H1 (cell line): ENCODE measurements at regions of chr2 and their contacts with region 1.

Region 1: DNA sequence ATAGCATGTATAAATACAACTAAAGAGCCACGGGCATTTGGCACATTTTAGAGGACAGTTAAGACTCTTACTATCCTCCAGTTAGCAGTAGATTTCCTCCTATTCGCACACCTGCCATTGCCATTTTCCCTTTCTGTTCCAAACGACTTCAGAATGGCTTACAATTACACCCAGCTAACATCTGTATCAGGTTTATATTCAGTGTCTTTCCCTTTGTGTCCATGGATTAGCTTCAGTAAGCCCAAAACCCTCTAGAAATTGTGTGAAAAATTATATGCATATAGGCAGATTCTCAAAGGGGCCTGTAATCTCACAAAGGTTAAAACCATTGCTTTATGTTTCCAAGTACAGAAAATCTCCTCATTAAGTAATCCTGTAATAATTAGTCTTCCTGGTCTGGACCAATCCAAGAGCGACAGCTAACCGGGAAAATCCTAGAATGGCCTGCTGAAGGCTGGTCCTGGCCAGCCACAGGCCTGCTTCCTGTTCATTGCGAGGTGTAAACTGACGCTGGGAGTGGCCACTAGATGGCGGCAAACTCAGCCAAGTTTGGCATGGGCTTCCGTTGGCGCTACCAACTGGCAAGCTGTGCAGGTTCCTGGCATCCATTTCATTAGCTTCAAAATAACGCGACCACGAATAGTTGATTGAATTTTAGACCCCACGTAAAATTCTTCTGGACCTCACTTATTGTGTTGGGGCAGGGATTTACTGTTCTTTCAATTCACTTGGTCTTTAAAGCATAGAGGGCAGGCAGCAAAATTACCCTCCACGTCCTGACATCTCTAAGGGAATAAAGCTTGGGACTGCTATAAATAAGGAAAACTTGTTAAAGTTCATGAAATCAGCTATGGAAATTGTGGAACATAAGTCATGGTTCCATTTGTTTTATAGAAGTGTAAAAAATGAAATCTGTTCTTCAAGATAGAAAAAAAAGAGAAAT is 17.1 kb downstream of the ARHGAP25 start:
- DNase-seq: peak; percentile 69 to 95
- H3K4me3 ChIP-seq: no peak overlapping the region
- H3K27ac ChIP-seq: no peak overlapping the region
- H3K4me1 ChIP-seq: peaks cover 0 to 3% (median 0%) of the 10 kb centered on the region in 4 experiments; a peak in 1 of 7 replicates
- H3K27me3 ChIP-seq: no peaks in the 10 kb centered on the region
- CTCF ChIP-seq: peak; percentile 93 to 97 (median 96)
- EP300 ChIP-seq: 0 out of 3 replicates have a peak, but pooled peaks of 1 of the 2 experiments have one; percentile 14
- POLR2A ChIP-seq: no peak
- RAD21 ChIP-seq: peak; percentile 87 to 94

Region 2: DNA sequence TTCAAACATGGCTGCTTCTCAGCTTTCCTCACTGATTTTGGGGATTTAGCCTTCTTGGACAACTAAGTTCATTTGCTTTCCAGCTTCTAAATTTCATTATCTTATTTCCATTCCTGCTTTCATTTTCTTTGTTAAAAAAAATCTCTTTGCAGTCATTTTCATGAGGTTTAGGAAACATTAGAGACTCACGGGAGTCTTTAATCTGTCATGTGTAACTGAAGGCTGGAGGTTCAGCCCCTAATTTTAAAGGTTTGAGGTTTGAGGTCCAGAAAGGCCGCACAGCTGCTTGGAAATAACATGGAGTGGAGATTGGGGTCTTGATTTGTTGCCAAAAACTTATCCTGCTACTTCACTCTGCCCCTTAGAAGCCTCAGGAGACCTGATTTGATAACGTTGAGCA is 78.0 kb before region 1 on chr2:
- CTCF ChIA-PET with region 1: no interaction called
- POLR2A ChIA-PET with region 1: no interaction called
- DNase-seq: no peak
- H3K4me3 ChIP-seq: no peak overlapping the region
- H3K27ac ChIP-seq: no peak overlapping the region
- H3K4me1 ChIP-seq: peaks cover 0 to 4% (median 0%) of the 10 kb centered on the region in 4 experiments; a peak in 2 of 7 replicates
- H3K27me3 ChIP-seq: no peaks in the 10 kb centered on the region
- CTCF ChIP-seq: no peak
- EP300 ChIP-seq: no peak
- POLR2A ChIP-seq: no peak
- RAD21 ChIP-seq: no peak

Region 3: DNA sequence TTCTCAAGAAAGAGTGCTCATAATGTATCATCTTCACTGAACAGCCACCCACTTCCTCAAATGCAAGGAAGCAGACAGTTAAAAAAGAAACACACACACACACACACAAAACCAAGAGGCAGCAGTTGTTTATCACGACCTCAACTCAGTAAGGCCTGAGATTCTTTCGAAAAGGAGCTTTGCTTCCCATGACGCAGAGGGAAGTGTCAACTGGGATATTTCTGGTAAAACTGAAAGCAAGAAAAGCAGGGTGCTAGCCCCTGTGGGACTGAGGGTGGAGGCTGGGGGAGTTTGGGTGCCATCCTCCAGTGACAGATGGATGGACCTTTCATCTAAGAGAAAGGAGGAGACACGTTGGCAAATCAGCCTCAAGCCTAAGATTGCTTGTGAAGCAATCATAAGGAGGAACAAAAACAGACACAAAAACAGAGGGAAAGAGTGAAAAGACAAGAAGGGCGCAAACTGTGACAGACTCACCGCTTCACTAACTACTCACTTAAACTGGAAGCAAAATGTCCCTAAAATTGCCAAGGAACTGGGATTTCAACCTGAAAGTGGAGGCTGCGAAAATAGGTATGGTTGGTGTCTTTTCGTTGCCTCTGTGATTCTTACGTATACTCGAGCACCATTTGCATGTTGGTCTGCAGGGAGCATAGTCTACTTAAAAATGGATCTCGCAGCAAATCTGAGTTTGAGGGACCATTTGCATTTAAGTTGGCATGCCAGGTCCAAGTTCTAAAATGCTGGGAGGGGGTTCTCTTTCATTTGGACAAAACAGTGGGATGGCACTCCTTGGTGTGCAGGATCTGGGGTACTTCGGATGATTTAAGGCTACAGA is 16.8 kb before region 1 on chr2 and contains the start of gene ARHGAP25:
- CTCF ChIA-PET with region 1: interaction called, 18 read pairs
- POLR2A ChIA-PET with region 1: no interaction called
- DNase-seq: no peak
- H3K4me3 ChIP-seq: no peak within 1 kb of the TSS
- H3K27ac ChIP-seq: no peak within 1 kb of the TSS
- H3K4me1 ChIP-seq: no peaks in the 10 kb centered on the region
- H3K27me3 ChIP-seq: no peaks in the 10 kb centered on the region; a peak in 1 of 7 replicates
- CTCF ChIP-seq: no peak
- EP300 ChIP-seq: no peak
- POLR2A ChIP-seq: no peak
- RAD21 ChIP-seq: no peak
- total RNA-seq, gene ARHGAP25: 0.42 and 1.2 TPM in 2 replicates

Region 4: DNA sequence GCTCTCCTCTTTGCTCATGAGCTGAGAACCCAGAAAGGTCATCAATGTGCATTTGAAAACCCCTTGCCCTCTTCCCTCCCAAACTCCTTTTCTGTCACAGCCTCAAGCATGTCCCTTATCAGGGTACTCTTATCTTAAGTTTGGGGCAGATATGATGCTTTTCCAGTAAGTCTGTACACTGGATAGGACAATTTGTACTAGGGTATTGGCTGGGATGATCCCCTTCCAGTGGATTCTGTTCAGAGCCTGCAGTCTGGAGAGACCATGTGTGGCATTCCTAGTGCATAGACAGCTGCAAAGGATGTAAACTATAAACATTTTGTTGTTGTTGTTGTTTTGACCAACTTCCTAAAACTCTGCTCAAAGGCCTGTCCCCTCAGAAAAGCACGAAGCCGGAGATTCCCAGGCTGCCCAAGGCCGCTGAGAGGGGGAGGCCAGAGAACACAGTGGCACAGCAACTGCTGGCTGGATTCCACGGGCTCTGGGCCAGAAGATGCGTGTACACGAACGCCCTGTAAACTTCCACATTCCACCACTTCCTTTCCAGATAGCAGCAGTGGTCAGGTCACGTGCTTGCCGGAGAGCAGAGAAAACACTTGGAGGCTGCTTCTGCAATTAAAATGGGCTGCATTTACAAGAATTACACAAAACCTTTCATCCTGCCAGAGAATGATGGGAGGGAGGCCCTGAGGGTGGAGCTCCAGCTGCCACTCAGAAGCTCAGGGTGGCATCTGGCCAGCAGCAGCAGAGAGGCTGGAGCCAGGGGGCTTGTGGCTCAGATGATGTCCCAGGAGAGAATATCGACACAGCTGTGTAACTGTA is 77.4 kb after region 1 on chr2:
- CTCF ChIA-PET with region 1: interaction called, 11 read pairs
- POLR2A ChIA-PET with region 1: no interaction called
- DNase-seq: no peak
- H3K4me3 ChIP-seq: no peak overlapping the region
- H3K27ac ChIP-seq: no peak overlapping the region
- H3K4me1 ChIP-seq: peaks cover 0 to 1% (median 0%) of the 10 kb centered on the region in 4 experiments; a peak in 1 of 7 replicates
- H3K27me3 ChIP-seq: no peaks in the 10 kb centered on the region
- CTCF ChIP-seq: no peak
- EP300 ChIP-seq: no peak
- POLR2A ChIP-seq: no peak
- RAD21 ChIP-seq: no peak

Region 5: DNA sequence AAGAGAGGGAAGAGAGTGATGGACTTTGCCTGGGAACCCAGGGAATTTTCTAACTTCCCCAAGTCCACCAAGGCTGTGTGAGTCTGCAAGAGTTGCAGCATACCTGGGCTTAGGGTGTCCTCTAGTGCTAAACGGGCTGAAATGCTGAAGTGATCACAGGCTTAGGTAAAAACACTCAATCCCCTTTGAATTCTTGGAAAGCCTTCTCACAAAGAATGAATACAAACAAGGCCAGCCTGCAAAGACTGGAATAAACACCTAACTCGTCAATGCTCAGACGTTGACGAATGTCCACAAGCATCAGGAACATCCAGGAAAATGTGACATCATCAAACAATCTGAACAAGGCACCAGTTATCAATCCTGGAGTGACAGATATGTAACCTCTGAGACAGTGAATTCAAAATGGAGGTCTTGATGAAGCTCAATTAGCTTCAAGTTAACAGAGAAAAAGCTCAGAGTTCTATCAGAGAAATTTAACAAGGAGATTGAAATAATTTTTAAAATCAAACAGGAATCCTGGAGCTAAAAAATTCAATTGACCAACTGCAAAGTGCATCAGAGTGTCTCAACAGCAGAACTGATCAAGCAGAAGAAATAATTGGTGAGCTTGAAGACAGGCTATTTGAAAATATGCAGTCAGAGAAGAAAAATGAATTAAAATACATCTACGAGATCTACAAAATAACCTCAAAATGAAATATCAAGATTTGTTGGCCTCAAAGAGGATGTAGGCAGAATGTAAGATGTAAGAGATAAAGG is 149.7 kb after region 1 on chr2:
- CTCF ChIA-PET with region 1: interaction called, 12 read pairs
- POLR2A ChIA-PET with region 1: no interaction called
- DNase-seq: no peak
- H3K4me3 ChIP-seq: no peak overlapping the region
- H3K27ac ChIP-seq: no peak overlapping the region
- H3K4me1 ChIP-seq: no peaks in the 10 kb centered on the region
- H3K27me3 ChIP-seq: no peaks in the 10 kb centered on the region
- CTCF ChIP-seq: peak in 2 of 3 experiments; percentile 72 to 79; a peak in 3 of 4 replicates
- EP300 ChIP-seq: no peak
- POLR2A ChIP-seq: no peak
- RAD21 ChIP-seq: peak; percentile 89 to 94